CD8-positive, alpha-beta T cell (primary cell): ENCODE measurements at regions of chr20 and their contacts with region 1.

Region 1: GRCh38 chr20:5529331-5530148 is 212.8 kb upstream of the PROKR2 start:
- DNase-seq: peak; percentile 68 to 87 (median 83)
- ATAC-seq: peak; percentile 92
- H3K4me3 ChIP-seq: peak overlapping the region in 1 of 2 experiments; percentile 13
- H3K4me3 Mint-ChIP-seq: peak overlapping the region; percentile 76
- H3K27ac ChIP-seq: no peak overlapping the region
- H3K27ac Mint-ChIP-seq: peak overlapping the region; percentile 74
- H3K4me1 ChIP-seq: peaks cover 4% of the 10 kb centered on the region
- H3K4me1 Mint-ChIP-seq: peaks cover 11% of the 10 kb centered on the region
- H3K27me3 ChIP-seq: no peaks in the 10 kb centered on the region
- H3K27me3 Mint-ChIP-seq: no peaks in the 10 kb centered on the region
- CTCF ChIP-seq: peak; percentile 48

Region 2: GRCh38 chr20:5451643-5452210 is 77.8 kb before region 1 on chr20:
- CTCF ChIA-PET with region 1: no interaction called
- POLR2A ChIA-PET with region 1: no interaction called
- intact Hi-C with region 1: no loop called
- DNase-seq: no peak
- ATAC-seq: no peak
- H3K4me3 ChIP-seq: no peak overlapping the region
- H3K4me3 Mint-ChIP-seq: no peak overlapping the region
- H3K27ac ChIP-seq: no peak overlapping the region
- H3K27ac Mint-ChIP-seq: no peak overlapping the region
- H3K4me1 ChIP-seq: no peaks in the 10 kb centered on the region
- H3K4me1 Mint-ChIP-seq: no peaks in the 10 kb centered on the region
- H3K27me3 ChIP-seq: peaks cover 0 to 2% of the 10 kb centered on the region in 2 experiments
- H3K27me3 Mint-ChIP-seq: peaks cover 9% of the 10 kb centered on the region
- CTCF ChIP-seq: no peak

Region 3: DNA sequence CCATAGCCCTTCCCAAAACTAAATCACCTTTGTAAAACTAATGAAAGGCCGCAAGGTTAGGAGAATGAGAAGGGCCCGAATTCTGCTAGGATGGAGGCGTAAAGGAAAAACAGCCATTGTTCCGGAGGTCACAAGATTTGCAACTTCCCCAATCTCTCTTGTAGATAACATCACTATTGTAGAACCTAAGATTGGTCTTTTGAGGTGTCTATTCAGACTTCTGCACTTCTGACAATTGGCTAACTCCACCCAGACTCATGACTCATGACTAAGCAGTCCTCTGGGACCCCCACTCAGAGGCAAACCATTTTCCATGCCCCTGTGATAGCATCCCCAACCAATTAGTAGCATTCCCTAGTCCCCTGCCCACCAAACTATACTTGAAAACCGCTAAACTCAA is 10.2 kb after region 1 on chr20:
- CTCF ChIA-PET with region 1: interaction called, 22 read pairs
- POLR2A ChIA-PET with region 1: no interaction called
- intact Hi-C with region 1: no loop called
- DNase-seq: no peak
- ATAC-seq: no peak
- H3K4me3 ChIP-seq: no peak overlapping the region
- H3K4me3 Mint-ChIP-seq: no peak overlapping the region
- H3K27ac ChIP-seq: no peak overlapping the region
- H3K27ac Mint-ChIP-seq: no peak overlapping the region
- H3K4me1 ChIP-seq: no peaks in the 10 kb centered on the region
- H3K4me1 Mint-ChIP-seq: no peaks in the 10 kb centered on the region
- H3K27me3 ChIP-seq: no peaks in the 10 kb centered on the region
- H3K27me3 Mint-ChIP-seq: no peaks in the 10 kb centered on the region
- CTCF ChIP-seq: no peak

Region 4: GRCh38 chr20:5557123-5557522 is 27.6 kb after region 1 on chr20:
- CTCF ChIA-PET with region 1: interaction called, 24 read pairs
- POLR2A ChIA-PET with region 1: no interaction called
- intact Hi-C with region 1: no loop called
- DNase-seq: peak; percentile 17 to 66 (median 51)
- ATAC-seq: peak; percentile 74
- H3K4me3 ChIP-seq: no peak overlapping the region
- H3K4me3 Mint-ChIP-seq: no peak overlapping the region
- H3K27ac ChIP-seq: no peak overlapping the region
- H3K27ac Mint-ChIP-seq: peak overlapping the region; percentile 18
- H3K4me1 ChIP-seq: no peaks in the 10 kb centered on the region
- H3K4me1 Mint-ChIP-seq: no peaks in the 10 kb centered on the region
- H3K27me3 ChIP-seq: no peaks in the 10 kb centered on the region
- H3K27me3 Mint-ChIP-seq: no peaks in the 10 kb centered on the region
- CTCF ChIP-seq: no peak

Region 5: GRCh38 chr20:5608442-5609161 is 79.1 kb after region 1 on chr20:
- CTCF ChIA-PET with region 1: interaction called, 5 read pairs
- POLR2A ChIA-PET with region 1: no interaction called
- intact Hi-C with region 1: loop called in 1 of 2 experiments (anchors 5 kb)
- DNase-seq: peak in 2 of 9 experiments; percentile 27 to 52
- ATAC-seq: no peak
- H3K4me3 ChIP-seq: peak overlapping the region; percentile 59 to 97
- H3K4me3 Mint-ChIP-seq: peak overlapping the region; percentile 98
- H3K27ac ChIP-seq: peak overlapping the region; percentile 94 to 96
- H3K27ac Mint-ChIP-seq: peak overlapping the region; percentile 99
- H3K4me1 ChIP-seq: peaks cover 42% of the 10 kb centered on the region
- H3K4me1 Mint-ChIP-seq: peaks cover 55% of the 10 kb centered on the region
- H3K27me3 ChIP-seq: no peaks in the 10 kb centered on the region
- H3K27me3 Mint-ChIP-seq: no peaks in the 10 kb centered on the region
- CTCF ChIP-seq: no peak

Region 6: DNA sequence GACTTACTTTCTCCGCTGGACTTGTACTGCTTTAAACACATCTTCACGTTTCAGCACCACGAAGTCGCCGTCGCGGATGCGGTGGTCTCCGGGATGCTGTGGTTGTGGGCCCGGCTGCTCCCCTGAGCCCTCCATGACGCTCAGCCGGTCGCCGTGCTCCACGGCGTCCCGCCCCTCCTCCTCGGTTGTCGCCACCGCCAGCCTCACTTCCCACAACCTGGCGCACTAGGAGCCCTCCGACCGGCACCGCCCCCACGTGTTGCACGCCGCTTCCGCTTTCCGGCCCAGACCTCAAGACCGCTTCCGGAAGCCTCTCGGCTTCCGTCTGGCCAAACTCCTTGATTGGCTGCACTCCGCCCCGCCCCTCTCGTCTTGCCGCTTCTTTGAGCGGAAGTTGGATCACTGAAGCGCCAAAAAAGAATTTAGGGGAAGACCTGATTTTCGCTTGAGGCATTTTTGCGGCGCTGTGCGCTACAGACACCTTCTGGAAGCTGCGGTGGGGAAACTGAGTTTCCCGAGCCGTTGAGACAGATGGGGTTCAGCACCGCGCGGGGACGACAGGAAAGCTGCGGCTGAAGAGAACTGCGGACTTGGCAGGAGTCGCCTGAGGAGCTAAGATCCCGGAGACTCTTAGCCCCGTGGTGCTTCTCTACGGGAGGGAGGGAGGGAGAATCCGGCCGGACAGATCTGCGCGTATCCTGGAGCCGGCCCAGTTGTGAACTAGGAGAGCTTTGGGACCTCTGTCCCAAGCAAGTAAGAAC is 420.9 kb after region 1 on chr20 and contains the starts of genes MCM8 and TRMT6:
- CTCF ChIA-PET with region 1: no interaction called
- POLR2A ChIA-PET with region 1: no interaction called
- intact Hi-C with region 1: loop called (anchors 1 to 5 kb)
- DNase-seq: peak; percentile 88 to 98 (median 95)
- ATAC-seq: peak; percentile 95
- H3K4me3 ChIP-seq: peak within 1 kb of the TSS; percentile 80 to 82
- H3K4me3 Mint-ChIP-seq: peak within 1 kb of the TSS; percentile 96
- H3K27ac ChIP-seq: peak within 1 kb of the TSS; percentile 62 to 73
- H3K27ac Mint-ChIP-seq: peak within 1 kb of the TSS; percentile 93
- H3K4me1 ChIP-seq: peaks cover 19% of the 10 kb centered on the region
- H3K4me1 Mint-ChIP-seq: peaks cover 48% of the 10 kb centered on the region
- H3K27me3 ChIP-seq: no peaks in the 10 kb centered on the region
- H3K27me3 Mint-ChIP-seq: no peaks in the 10 kb centered on the region
- CTCF ChIP-seq: no peak
- total RNA-seq, gene MCM8: 1.8 to 2.0 TPM
- total RNA-seq, gene TRMT6: 9.6 to 10.4 TPM

Region 7: GRCh38 chr20:6074145-6074561 is 544.6 kb after region 1 on chr20:
- CTCF ChIA-PET with region 1: interaction called, 69 read pairs
- POLR2A ChIA-PET with region 1: no interaction called
- intact Hi-C with region 1: loop called in 1 of 2 experiments (anchors 1 kb)
- DNase-seq: peak in 2 of 9 experiments; percentile 17 to 31
- ATAC-seq: no peak
- H3K4me3 ChIP-seq: no peak overlapping the region
- H3K4me3 Mint-ChIP-seq: no peak overlapping the region
- H3K27ac ChIP-seq: no peak overlapping the region
- H3K27ac Mint-ChIP-seq: no peak overlapping the region
- H3K4me1 ChIP-seq: no peaks in the 10 kb centered on the region
- H3K4me1 Mint-ChIP-seq: no peaks in the 10 kb centered on the region
- H3K27me3 ChIP-seq: no peaks in the 10 kb centered on the region
- H3K27me3 Mint-ChIP-seq: peaks cover 8% of the 10 kb centered on the region
- CTCF ChIP-seq: no peak